Right cardiac atrium (tissue), 5 donors: ENCODE measurements at regions of chr9 and their contacts with region 1.

Region 1: DNA sequence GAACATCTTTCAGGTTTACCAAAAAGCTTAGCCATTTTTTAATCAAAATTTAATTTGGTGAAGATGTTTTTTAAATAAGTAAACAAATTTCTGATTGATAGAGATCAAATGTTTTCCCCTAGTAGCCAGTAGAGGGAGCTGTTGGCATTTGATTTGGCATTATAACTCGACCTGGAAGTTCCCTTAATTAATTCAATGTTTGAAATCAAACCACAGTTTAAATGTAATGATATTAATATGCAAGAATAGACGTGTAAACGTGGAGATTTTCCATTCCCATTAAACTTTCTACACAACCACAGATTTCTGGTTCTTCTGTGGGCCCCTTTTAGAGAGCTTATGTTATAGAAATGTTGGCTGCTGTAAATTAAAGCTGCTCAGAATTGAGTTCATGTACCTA is 148.1 kb upstream of the MPDZ start:
- DNase-seq: no peak
- ATAC-seq: peak in 1 of 2 donors; percentile 44
- H3K4me3 ChIP-seq: peak overlapping the region; percentile 38
- H3K27ac ChIP-seq: no peak overlapping the region
- H3K4me1 ChIP-seq: peaks cover 2% of the 10 kb centered on the region
- H3K27me3 ChIP-seq: no peaks in the 10 kb centered on the region

Region 2: GRCh38 chr9:13149454-13149853 is 278.1 kb before region 1 on chr9:
- intact Hi-C with region 1: no loop called
- DNase-seq: peak; percentile 20 to 53 (median 50)
- ATAC-seq: peak; percentile 46 to 70
- H3K4me3 ChIP-seq: no peak overlapping the region
- H3K27ac ChIP-seq: no peak overlapping the region
- H3K4me1 ChIP-seq: no peaks in the 10 kb centered on the region
- H3K27me3 ChIP-seq: no peaks in the 10 kb centered on the region

Region 3: DNA sequence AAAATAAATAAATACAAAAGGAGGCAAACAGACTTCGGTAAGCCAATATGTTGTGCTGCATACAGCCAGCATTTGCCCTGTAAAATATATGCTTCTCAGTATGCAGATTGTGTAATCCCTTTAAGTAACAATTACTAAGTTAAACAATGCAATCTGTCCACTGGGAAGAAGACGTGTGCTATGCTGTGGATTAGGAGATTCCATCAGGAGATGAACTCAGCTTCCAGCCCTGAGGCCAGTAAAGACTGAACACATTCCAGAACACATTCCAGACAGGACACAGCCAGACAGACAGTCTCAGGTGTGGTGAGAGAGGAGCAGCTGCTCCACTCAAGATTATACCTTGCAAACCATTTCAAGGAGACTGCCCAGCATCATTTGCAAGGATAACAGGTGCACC is 245.9 kb before region 1 on chr9:
- intact Hi-C with region 1: no loop called
- DNase-seq: no peak
- ATAC-seq: no peak
- H3K4me3 ChIP-seq: no peak overlapping the region
- H3K27ac ChIP-seq: no peak overlapping the region
- H3K4me1 ChIP-seq: no peaks in the 10 kb centered on the region
- H3K27me3 ChIP-seq: no peaks in the 10 kb centered on the region

Region 4: DNA sequence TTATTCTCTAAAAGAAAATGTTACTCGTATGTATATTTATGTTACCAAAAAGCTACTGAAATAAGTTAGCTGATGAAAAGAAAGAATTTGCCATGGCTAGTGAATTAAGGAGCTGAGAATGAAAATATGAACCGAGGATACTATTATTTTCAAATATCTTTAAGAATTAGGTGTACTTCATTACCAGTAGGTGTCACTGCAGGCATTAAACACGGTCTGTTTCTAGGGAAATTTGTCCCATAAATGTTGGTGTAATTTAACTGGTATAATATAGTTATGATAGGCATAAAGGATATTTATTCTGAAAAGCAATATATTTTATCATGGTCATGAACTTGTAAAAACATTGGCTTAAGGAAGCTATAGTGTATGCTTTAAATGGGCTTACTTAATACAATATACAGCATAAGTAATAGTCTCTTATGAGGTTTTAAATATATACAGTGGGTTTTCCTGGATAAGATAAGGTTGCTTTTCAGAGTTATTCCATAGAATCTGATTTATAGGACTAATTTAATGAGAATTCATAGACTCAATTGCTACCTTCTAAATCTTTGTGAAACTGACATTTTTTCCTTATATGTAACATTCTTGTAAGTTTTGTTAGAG is 75.7 kb before region 1 on chr9:
- intact Hi-C with region 1: loop called in 1 of 4 experiments (anchors 10 kb)
- DNase-seq: no peak
- ATAC-seq: peak; percentile 39 to 43
- H3K4me3 ChIP-seq: no peak overlapping the region
- H3K27ac ChIP-seq: no peak overlapping the region
- H3K4me1 ChIP-seq: no peaks in the 10 kb centered on the region
- H3K27me3 ChIP-seq: no peaks in the 10 kb centered on the region

Region 5: DNA sequence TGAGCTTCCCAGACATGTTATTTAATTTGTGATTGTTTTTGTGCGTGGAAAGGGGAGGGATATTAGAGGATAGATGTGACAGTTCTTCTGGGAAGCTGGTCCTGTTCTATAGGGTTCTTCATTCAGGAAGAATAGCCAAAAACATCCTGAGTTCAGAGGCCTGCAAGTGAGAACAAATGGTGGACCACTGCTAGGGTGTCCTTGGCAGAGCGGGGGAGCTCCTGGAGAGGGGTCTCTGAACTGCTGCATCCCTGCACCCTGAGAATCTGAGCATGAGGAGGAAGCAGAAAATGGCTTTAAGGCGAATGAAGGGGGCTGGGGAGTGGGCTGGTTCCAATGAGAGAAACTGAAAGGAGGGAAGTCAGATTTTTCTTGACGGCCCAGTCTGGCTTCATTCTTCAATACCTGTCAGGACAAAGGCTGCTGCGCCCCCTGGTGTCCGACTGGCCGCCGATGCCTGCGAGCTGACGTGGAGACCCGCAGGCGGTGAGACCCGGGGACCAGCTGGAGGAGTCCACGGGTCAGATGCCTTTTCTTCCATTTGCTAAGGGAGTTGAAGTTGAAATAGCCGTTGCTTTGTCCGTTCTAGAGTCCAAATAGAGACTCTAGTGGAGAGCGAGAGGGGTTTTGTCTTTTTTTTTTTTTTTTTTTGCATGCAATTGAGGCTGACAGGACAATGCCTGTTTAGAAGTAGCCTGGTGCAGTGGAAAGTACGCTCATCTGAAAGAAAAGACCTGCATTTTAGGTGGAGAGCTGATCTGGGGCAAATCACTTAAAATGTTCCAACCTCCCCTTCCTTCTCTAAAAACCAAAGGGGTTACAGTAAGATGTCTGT is 925.9 kb after region 1 on chr9:
- intact Hi-C with region 1: loop called (anchors 5 to 10 kb)
- DNase-seq: peak; percentile 93 to 99 (median 98)
- ATAC-seq: peak; percentile 74 to 80
- H3K4me3 ChIP-seq: no peak overlapping the region
- H3K27ac ChIP-seq: peak overlapping the region; percentile 58
- H3K4me1 ChIP-seq: peaks cover 9% of the 10 kb centered on the region
- H3K27me3 ChIP-seq: no peaks in the 10 kb centered on the region

Region 6: GRCh38 chr9:14400658-14400995 is 973.0 kb after region 1 on chr9:
- intact Hi-C with region 1: loop called in 1 of 4 experiments (anchors 5 kb)
- DNase-seq: peak; percentile 65 to 78 (median 72)
- ATAC-seq: peak; percentile 94 to 95
- H3K4me3 ChIP-seq: peak overlapping the region; percentile 28
- H3K27ac ChIP-seq: no peak overlapping the region
- H3K4me1 ChIP-seq: peaks cover 1% of the 10 kb centered on the region
- H3K27me3 ChIP-seq: no peaks in the 10 kb centered on the region

Region 7: GRCh38 chr9:14428781-14429230 is 1001.2 kb after region 1 on chr9:
- intact Hi-C with region 1: loop called in 1 of 4 experiments (anchors 10 kb)
- DNase-seq: peak; percentile 77 to 85 (median 84)
- ATAC-seq: peak; percentile 73 to 76
- H3K4me3 ChIP-seq: no peak overlapping the region
- H3K27ac ChIP-seq: no peak overlapping the region
- H3K4me1 ChIP-seq: peaks cover 3% of the 10 kb centered on the region
- H3K27me3 ChIP-seq: no peaks in the 10 kb centered on the region